ENCODE measurements at regions of chr1 and their contacts with region 1.

Region 1: DNA sequence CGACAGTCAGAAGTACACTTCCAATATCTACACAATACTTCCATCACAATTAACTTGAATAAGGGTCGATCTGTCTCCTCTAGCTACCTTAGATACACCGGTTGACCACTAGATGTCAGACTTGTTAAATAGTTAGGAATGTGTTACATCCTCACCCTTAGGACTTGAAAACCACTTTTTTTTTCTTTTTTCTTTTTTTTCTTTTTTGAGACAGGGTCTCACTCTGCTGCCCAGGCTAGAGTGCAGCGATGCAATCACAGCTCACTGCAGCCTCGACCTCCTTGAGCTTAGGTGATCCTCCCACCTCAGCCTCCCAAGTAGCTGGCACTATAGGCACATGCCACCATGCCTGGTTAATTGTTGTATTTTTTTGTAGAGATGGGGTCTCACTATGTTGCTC is 120.4 kb upstream of the GREM2 start:
- DNase-seq: peak; percentile 35
- ATAC-seq: peak; percentile 86
- H3K4me3 ChIP-seq: no peak overlapping the region
- H3K27ac ChIP-seq: no peak overlapping the region
- H3K4me1 ChIP-seq: no peaks in the 10 kb centered on the region
- H3K27me3 ChIP-seq: no peaks in the 10 kb centered on the region
- CTCF ChIP-seq: peak; percentile 71

Region 2: DNA sequence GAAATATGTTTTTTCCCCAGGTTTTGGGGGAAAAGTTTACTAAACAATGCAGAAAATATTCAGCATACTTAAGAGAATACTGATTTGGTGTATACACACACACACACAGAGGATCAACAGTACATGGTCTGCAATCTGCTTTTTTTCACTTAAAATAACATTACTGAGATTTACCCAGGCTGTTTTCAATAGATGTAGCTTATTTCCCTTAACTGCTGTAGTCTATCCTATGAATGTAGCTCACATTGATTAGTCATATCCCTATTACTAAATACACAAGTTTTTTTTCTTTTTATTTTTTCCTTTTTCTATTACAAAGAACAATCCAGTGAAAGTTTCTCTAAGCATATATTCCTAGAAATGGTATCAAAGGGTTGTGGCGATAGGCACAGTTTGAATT is 146.2 kb after region 1 on chr1:
- CTCF ChIA-PET with region 1: no interaction called
- POLR2A ChIA-PET with region 1: no interaction called
- in situ Hi-C with region 1: no loop called
- intact Hi-C with region 1: loop called (anchors 5 kb)
- DNase-seq: no peak
- ATAC-seq: no peak
- H3K4me3 ChIP-seq: no peak overlapping the region
- H3K27ac ChIP-seq: no peak overlapping the region
- H3K4me1 ChIP-seq: no peaks in the 10 kb centered on the region
- H3K27me3 ChIP-seq: no peaks in the 10 kb centered on the region
- CTCF ChIP-seq: no peak

Region 3: GRCh38 chr1:240946926-240947325 is 214.5 kb after region 1 on chr1:
- CTCF ChIA-PET with region 1: no interaction called
- POLR2A ChIA-PET with region 1: no interaction called
- in situ Hi-C with region 1: no loop called
- intact Hi-C with region 1: loop called (anchors 2 kb)
- DNase-seq: no peak
- ATAC-seq: peak; percentile 85; the same call in 1 of the 2 replicates
- H3K4me3 ChIP-seq: no peak overlapping the region
- H3K27ac ChIP-seq: no peak overlapping the region
- H3K4me1 ChIP-seq: no peaks in the 10 kb centered on the region
- H3K27me3 ChIP-seq: no peaks in the 10 kb centered on the region
- CTCF ChIP-seq: peak; percentile 69

Region 4: DNA sequence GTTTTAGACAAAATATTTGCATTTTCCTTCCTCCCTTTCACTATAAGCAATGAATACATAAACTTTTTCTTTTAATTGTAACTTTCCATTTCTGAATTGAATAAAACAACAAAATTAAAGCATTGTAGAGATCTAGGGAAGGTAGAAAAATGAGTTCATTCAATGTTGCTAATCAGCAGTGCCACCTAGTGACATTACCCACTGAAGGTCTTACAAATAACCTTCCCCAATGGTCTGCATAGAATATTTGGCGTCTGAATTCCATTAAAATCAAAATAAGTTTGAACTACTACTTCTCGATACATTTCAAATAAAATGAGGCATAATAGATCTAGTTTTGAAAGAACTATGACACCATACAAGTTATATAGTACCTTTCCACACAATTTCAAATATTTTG is 767.5 kb after region 1 on chr1:
- CTCF ChIA-PET with region 1: interaction called, 4 read pairs
- POLR2A ChIA-PET with region 1: no interaction called
- in situ Hi-C with region 1: no loop called
- intact Hi-C with region 1: loop called (anchors 5 kb)
- DNase-seq: no peak
- ATAC-seq: no peak
- H3K4me3 ChIP-seq: no peak overlapping the region
- H3K27ac ChIP-seq: no peak overlapping the region
- H3K4me1 ChIP-seq: no peaks in the 10 kb centered on the region
- H3K27me3 ChIP-seq: no peaks in the 10 kb centered on the region
- CTCF ChIP-seq: peak; percentile 62; the same call in 1 of the 2 replicates